A673 (cell line): ENCODE measurements at regions of chr1 and their contacts with region 1.

Region 1: DNA sequence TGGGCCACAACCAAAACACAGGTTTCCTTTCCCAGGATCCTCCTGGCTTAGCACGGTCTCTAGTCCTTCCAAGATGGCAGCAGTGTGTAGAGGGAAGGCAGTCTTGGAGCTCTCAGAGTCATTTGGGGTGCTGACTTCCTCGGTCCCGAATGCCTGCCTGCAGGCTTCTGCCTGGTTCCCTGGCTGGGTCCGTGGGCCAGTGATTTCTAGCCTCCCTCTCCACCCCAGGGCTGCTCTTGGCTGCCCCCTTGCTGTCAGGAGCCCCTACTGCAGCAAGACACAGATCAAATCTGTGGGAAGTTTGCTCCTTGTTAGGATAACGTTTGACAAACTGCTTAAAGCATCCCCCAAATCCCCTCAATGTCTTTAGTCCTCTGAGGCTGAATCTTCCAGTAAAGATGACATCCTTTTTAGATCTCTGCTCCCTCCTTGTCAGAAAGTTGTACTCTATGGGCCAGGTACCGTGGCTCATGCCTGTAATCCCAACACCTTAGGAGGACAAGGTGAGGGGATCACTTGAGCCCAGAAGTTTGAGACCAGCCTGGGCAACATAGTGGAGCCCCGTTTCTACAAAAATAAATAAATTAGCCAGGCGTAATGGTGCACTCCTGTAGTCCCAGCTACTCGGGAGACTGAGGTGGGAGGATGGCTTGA is 272.5 kb downstream of the RRAGC start:
- DNase-seq: peak; percentile 84
- H3K4me3 ChIP-seq: no peak overlapping the region
- H3K27ac ChIP-seq: peak overlapping the region; percentile 45
- H3K4me1 ChIP-seq: peaks cover 64% of the 10 kb centered on the region
- H3K27me3 ChIP-seq: no peaks in the 10 kb centered on the region
- CTCF ChIP-seq: peak; percentile 99

Region 2: DNA sequence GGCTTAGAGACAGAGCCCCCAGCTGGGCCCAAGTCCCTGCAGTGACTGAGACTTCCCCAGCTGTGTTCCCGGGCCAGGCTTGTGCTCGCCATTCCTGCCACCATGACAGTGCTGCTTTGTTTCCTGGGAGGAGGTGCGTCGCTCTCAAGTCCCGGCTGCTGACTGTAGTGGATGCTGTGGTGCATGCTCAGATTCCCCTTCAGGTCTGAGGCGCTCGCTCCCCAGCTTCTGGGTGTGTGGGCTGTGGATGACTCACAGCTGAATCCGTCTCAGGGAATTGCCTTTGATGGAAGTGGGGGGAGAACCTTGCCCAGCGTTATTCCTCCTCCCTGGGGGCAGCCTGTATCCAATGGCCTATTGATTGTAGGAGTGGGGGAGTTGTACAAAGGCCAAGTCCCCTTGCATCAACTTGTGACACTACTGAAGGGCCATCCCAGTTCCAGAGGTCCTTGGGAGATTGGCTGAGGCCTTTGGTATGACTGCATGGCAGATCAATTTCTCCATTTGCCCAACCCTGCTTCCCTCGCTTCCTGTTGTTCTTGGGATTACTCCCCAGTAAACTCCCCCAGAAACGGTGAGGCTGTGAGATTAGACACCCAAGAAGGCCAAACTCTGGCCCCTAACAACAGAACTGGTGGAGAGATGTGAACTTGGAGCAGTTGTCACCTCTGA is 522.8 kb before region 1 on chr1:
- CTCF ChIA-PET with region 1: no interaction called
- POLR2A ChIA-PET with region 1: no interaction called
- intact Hi-C with region 1: loop called (anchors 1 kb)
- DNase-seq: peak; percentile 94
- H3K4me3 ChIP-seq: no peak overlapping the region
- H3K27ac ChIP-seq: peak overlapping the region; percentile 96
- H3K4me1 ChIP-seq: peaks cover 96% of the 10 kb centered on the region
- H3K27me3 ChIP-seq: no peaks in the 10 kb centered on the region
- CTCF ChIP-seq: 0 out of 2 replicates have a peak, but pooled peaks have one; percentile 25

Region 3: DNA sequence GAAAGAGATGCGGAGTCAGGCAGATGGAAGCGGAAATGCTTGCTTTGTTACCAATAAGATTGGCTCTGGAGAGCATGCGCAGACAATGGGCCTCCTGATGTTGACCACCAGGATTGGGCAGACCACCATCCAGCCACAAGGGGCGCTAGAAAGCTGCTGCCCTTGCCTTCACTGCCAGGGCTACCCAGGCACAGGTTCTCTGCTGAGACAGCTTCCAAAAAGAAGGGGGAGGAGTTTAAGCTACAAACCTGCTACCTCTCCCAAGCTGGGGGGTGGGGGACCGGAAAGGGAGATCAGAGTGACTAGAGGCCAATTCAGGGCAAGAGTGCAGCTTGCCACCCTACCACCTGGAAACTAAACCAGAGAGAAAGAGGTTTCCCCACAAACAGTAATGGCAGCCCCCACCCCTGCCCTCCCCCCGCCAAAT is 97.3 kb before region 1 on chr1:
- CTCF ChIA-PET with region 1: no interaction called
- POLR2A ChIA-PET with region 1: no interaction called
- intact Hi-C with region 1: loop called (anchors 5 kb)
- DNase-seq: peak; percentile 64
- H3K4me3 ChIP-seq: no peak overlapping the region
- H3K27ac ChIP-seq: peak overlapping the region; percentile 17
- H3K4me1 ChIP-seq: peaks cover 31% of the 10 kb centered on the region
- H3K27me3 ChIP-seq: no peaks in the 10 kb centered on the region
- CTCF ChIP-seq: peak; percentile 77

Region 4: DNA sequence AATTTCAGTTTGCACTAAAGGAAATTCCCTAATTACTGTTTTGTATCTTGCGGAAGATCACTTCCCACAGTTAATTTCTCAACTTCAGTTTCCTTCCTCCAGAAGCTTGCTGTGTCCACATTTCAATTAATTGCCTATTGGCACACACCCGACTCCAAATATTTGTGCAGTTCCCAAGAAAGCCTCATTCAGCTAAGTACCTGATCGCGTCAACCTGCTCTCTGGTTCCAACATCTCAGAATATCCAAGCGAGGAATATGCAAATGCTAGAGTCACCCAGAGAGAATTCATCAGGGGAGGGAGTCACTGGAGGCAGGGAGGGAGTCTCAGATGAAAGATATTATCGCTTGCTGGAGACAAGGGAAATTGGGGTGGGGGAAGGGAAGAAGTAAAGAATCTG is 78.9 kb before region 1 on chr1:
- CTCF ChIA-PET with region 1: no interaction called
- POLR2A ChIA-PET with region 1: no interaction called
- intact Hi-C with region 1: loop called (anchors 5 kb)
- DNase-seq: peak; percentile 94
- H3K4me3 ChIP-seq: peak overlapping the region; percentile 3
- H3K27ac ChIP-seq: peak overlapping the region; percentile 51
- H3K4me1 ChIP-seq: peaks cover 65% of the 10 kb centered on the region
- H3K27me3 ChIP-seq: no peaks in the 10 kb centered on the region
- CTCF ChIP-seq: no peak